ENCODE measurements at regions of chr13 and their contacts with region 1.

Region 1: DNA sequence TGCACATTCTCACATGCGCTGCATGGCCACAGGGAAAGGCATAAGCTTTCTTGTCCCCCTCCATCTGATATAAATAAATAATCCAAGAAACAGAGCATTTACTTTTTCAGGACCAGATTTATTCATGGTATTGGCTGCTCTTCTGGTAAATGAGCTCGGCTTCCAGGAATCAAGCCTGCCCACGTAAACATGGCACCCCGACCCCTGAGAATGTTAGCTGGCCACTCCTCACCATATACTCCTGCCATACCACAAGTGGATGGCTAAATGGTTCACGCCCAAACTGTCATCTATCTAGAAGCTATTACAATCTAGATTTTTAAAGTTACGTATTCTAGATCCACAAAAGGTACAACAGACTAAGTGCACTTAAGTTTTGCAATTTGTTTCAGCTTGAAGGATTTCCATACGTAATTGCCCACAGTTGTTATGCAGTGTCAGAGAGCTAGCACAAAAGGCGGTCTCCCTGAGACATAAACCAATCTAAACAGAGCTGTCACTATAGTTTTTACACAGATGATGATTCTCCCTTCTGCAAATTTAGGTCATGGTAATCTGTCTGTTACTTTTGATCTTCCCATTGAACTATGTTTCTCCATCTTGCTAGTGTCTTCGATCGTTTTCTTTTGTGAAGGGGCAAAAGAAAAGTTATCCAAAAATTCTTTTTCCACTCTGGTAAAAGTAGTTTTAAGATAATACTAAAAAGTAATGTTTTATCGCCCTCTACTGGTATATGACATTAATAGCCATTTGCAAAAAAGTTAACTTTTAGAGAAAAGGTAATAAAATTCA is 16.2 kb upstream of the FOXO1 start:
- DNase-seq: no peak
- H3K4me3 ChIP-seq: no peak overlapping the region
- H3K27ac ChIP-seq: no peak overlapping the region
- H3K4me1 ChIP-seq: peaks cover 0 to 17% (median 6%) of the 10 kb centered on the region in 4 donors
- H3K27me3 ChIP-seq: no peaks in the 10 kb centered on the region
- CTCF ChIP-seq: peak; percentile 22 to 69 (median 58)
- EP300 ChIP-seq: no peak
- POLR2A ChIP-seq: no peak

Region 2: DNA sequence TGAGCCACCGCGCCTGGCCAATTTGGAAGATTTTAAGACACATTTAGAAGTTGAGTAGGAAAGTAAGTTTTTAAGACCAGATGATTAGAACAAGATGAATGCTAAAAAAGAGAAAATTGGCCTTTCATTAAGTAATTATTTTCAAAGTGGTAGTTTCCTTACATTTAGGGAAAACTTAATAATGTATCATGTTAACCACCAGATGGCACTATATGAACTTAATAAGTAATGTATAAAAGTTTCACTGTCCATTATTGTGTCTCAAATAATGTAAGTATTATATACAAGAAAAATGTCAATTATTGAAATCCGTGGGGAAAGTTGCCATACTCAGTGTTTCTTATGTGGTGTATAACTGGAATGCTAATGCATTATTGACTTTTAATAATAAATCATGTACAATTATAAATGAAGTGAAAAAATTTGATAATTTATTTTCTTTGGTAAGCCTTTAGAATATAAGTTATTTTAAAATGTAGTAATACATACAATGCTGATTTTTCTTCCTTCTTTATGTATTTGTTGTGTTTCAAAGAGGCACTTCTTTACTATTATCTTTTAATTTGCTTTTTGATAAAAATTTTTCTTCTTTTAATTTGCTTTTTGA is 998.0 kb before region 1 on chr13:
- intact Hi-C with region 1: loop called (anchors 5 kb)
- DNase-seq: no peak
- H3K4me3 ChIP-seq: no peak overlapping the region
- H3K27ac ChIP-seq: no peak overlapping the region
- H3K4me1 ChIP-seq: no peaks in the 10 kb centered on the region
- H3K27me3 ChIP-seq: no peaks in the 10 kb centered on the region
- CTCF ChIP-seq: peak in 3 of 4 experiments; percentile 22 to 48 (median 38)
- EP300 ChIP-seq: no peak
- POLR2A ChIP-seq: no peak

Region 3: DNA sequence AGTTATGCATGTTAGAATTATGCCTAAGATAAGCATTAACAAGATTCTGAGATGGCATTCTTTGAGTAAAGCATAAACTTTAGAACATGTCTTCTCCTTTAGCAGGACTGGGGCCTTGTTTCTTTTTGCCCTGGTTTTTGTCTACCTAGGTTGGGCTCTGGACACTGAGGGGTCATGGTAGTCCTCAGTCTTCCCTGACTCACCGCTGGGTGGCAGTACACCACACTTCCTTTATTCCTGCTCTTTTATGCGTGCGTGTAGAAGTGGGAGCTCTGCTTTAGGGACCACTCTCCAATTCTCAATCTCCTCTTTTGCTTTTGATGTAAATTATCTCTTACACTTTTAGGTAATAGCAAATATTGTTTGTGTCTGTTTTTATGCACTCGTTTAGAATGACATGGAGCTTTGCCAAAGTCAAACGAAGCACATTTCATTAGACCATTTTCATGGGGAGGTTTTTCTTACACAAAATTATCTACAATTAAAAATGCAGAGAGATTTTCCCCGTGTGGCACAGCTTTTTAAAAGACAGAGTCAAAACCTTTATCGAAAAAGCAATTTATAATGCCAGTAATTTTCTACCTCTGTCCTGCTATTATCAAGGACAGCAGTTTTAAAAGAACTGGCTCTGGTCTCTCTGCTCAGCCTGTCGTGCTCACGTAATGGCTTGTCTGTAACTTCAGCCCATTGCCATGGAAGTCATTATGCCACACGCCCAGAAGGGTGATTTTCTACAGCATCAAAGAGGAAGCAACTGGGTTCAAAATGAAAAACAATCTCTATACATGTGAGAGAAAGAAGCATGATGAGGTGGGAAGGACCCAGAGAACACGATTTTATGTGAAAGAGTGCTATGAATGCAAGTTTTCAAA is 613.2 kb before region 1 on chr13:
- intact Hi-C with region 1: loop called (anchors 1 kb)
- DNase-seq: peak; percentile 86
- H3K4me3 ChIP-seq: no peak overlapping the region
- H3K27ac ChIP-seq: peak overlapping the region in 1 of 4 donors; percentile 31
- H3K4me1 ChIP-seq: peaks cover 0 to 14% (median 5%) of the 10 kb centered on the region in 4 donors
- H3K27me3 ChIP-seq: no peaks in the 10 kb centered on the region
- CTCF ChIP-seq: peak; percentile 73 to 89 (median 82)
- EP300 ChIP-seq: no peak
- POLR2A ChIP-seq: no peak

Region 4: DNA sequence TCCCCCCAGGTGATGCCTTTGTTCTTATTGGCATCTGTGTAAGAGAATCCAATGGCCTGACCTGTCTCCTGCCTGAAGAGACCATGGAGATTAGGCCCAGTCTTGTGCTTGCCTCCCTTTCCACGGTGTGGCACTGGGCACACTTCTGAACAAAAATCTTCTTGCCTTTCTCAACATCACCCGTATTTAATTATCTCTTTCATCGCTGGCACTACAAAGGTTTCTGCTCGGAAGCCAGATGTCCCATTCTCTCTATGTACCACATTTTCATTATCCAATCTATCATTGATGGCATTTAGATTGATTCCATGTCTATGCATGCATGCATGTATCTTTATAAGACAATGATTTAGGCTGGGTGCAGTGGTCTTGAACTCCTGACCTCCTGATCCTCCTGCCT is 181.1 kb after region 1 on chr13:
- intact Hi-C with region 1: no loop called
- DNase-seq: no peak
- H3K4me3 ChIP-seq: no peak overlapping the region
- H3K27ac ChIP-seq: no peak overlapping the region
- H3K4me1 ChIP-seq: no peaks in the 10 kb centered on the region
- H3K27me3 ChIP-seq: no peaks in the 10 kb centered on the region
- CTCF ChIP-seq: no peak
- EP300 ChIP-seq: no peak
- POLR2A ChIP-seq: no peak

Measured in sigmoid colon (tissue), 7 donors.